GM10248 (cell line): ENCODE measurements at regions of chr9 and their contacts with region 1.

Region 1: DNA sequence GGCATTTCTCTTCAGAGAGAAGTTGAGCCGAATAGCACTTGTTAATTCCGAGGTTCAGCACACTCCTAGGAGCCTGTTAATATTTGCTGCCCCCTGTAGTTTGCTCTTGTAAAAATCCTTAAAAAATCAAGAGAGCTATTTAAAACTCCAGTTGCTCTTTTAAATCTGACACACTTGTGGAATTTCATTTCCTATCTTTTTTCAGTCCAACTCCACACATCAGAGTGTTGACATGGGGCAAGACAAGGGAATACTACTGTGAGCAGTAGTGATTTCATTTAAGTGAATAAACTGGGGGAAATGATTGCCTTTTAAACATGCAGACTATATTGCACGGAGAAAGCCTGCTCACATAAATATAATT is 1096.3 kb upstream of the DMAC1 start:
- DNase-seq: peak; percentile 8
- CTCF ChIP-seq: peak; percentile 24

Region 2: GRCh38 chr9:8880060-8880459 is 15.8 kb before region 1 on chr9:
- CTCF ChIA-PET with region 1: interaction called, 14 read pairs
- POLR2A ChIA-PET with region 1: no interaction called
- DNase-seq: no peak
- CTCF ChIP-seq: no peak